ENCODE measurements at regions of chr6 and their contacts with region 1.

Region 1: GRCh38 chr6:80605165-80605989 is 498.9 kb downstream of the BCKDHB start:
- DNase-seq: peak; percentile 60
- H3K4me3 ChIP-seq: no peak overlapping the region
- H3K27ac ChIP-seq: no peak overlapping the region
- H3K4me1 ChIP-seq: no peaks in the 10 kb centered on the region
- H3K27me3 ChIP-seq: no peaks in the 10 kb centered on the region
- CTCF ChIP-seq: peak; percentile 25 to 46
- POLR2A ChIP-seq: no peak

Region 2: DNA sequence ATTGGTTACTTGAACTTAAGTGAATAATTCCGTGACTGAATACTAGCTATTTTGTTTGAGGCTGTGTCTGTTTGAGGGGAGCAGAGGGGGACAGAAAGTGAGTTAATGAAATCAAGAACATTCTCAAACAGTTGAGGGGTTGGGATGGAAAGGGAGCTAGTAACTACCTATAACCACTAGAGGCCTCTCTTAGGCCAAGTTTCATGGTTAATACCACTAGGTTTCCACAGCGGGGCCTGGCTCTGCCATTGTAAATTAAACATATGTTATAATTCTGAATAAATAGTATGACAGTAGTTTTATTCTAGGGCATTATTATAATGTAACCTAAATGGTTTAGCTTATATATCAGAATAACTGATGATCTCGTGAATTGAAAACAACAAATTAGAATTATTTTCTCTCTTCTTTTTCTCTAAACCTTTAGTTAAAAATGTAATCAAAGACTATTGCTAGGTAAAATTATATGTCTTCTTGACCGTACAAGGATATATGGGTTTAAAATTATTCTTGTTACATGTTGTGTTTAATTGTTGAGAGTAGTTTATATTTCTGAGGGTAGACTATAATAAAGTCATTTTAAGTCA is 390.8 kb before region 1 on chr6:
- CTCF ChIA-PET with region 1: interaction called, 23 read pairs
- POLR2A ChIA-PET with region 1: no interaction called
- dilution Hi-C with region 1: no loop called
- intact Hi-C with region 1: loop called (anchors 1 kb)
- DNase-seq: peak; percentile 62
- H3K4me3 ChIP-seq: no peak overlapping the region
- H3K27ac ChIP-seq: no peak overlapping the region
- H3K4me1 ChIP-seq: no peaks in the 10 kb centered on the region
- H3K27me3 ChIP-seq: no peaks in the 10 kb centered on the region
- CTCF ChIP-seq: peak; percentile 55 to 74
- POLR2A ChIP-seq: no peak

Region 3: DNA sequence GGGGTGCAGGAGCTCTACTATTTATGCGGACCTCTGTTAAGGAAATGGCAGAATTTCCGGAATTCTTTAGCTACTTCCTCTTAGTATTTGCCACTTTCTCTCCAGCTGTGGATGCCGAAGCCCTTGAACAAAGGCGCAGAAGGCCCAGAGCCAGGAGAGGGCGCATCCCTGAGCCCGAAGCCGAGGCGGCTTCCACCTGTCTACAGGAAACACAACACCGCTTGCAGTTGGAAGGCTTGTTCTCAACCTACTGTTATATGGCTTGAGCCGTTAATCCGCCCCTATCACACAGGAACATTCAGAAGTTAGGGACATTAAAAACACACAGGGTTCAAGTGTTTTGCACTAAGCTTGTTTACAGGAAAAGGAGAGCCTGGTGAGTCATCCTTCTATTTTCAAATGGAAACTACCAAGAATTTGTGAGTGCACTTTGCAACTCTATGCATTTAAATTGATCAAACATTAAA is 81.8 kb before region 1 on chr6:
- CTCF ChIA-PET with region 1: interaction called, 9 read pairs
- POLR2A ChIA-PET with region 1: no interaction called
- dilution Hi-C with region 1: no loop called
- intact Hi-C with region 1: loop called (anchors 5 kb)
- DNase-seq: peak; percentile 93
- H3K4me3 ChIP-seq: peak overlapping the region in 1 of 3 experiments; percentile 21
- H3K27ac ChIP-seq: peak overlapping the region; percentile 79
- H3K4me1 ChIP-seq: peaks cover 23% of the 10 kb centered on the region
- H3K27me3 ChIP-seq: no peaks in the 10 kb centered on the region
- CTCF ChIP-seq: peak; percentile 61 to 67
- POLR2A ChIP-seq: no peak

Region 4: GRCh38 chr6:81075974-81076373 is 470.6 kb after region 1 on chr6:
- CTCF ChIA-PET with region 1: interaction called, 10 read pairs
- POLR2A ChIA-PET with region 1: no interaction called
- dilution Hi-C with region 1: no loop called
- intact Hi-C with region 1: loop called (anchors 10 kb)
- DNase-seq: peak; percentile 32
- H3K4me3 ChIP-seq: no peak overlapping the region
- H3K27ac ChIP-seq: no peak overlapping the region
- H3K4me1 ChIP-seq: no peaks in the 10 kb centered on the region
- H3K27me3 ChIP-seq: no peaks in the 10 kb centered on the region
- CTCF ChIP-seq: peak; percentile 27 to 56
- POLR2A ChIP-seq: no peak

Region 5: GRCh38 chr6:81981812-81982211 is 1376.4 kb after region 1 on chr6:
- CTCF ChIA-PET with region 1: interaction called, 3 read pairs
- POLR2A ChIA-PET with region 1: no interaction called
- dilution Hi-C with region 1: no loop called
- intact Hi-C with region 1: loop called (anchors 2 kb)
- DNase-seq: peak; percentile 68
- H3K4me3 ChIP-seq: no peak overlapping the region
- H3K27ac ChIP-seq: peak overlapping the region; percentile 66
- H3K4me1 ChIP-seq: peaks cover 15% of the 10 kb centered on the region
- H3K27me3 ChIP-seq: no peaks in the 10 kb centered on the region
- CTCF ChIP-seq: no peak
- POLR2A ChIP-seq: no peak

Region 6: DNA sequence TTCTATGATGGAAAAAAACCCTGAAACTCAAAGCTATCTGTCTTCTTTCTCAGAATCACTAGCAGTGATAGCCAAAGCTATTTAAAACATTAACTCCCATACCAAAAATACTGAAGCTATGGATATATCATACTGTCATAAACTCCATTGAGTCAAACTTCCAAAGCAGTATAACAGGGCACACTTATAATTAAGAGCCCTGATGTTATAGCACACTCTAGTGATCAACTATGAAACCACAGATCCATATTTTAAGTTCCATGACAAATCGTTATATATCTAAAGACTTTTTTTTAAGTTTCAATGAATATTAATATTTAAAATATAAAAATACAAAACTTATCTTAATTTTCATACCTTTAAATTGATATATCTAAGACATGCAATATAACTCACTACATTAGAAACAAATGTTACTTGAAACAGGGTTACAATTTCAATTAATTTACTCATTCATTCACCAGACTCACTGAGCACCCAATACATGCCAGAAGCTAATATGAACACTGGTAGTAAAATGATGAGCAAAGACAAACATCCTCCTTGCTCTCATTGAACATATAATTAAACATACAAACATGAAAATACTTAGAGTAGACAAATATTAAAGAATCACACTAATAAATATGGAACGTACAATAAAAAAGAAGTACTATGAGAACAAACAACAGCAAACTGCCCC is 1572.8 kb after region 1 on chr6:
- CTCF ChIA-PET with region 1: interaction called, 3 read pairs
- POLR2A ChIA-PET with region 1: no interaction called
- dilution Hi-C with region 1: no loop called
- intact Hi-C with region 1: loop called (anchors 2 kb)
- DNase-seq: peak; percentile 56
- H3K4me3 ChIP-seq: no peak overlapping the region
- H3K27ac ChIP-seq: no peak overlapping the region
- H3K4me1 ChIP-seq: no peaks in the 10 kb centered on the region
- H3K27me3 ChIP-seq: no peaks in the 10 kb centered on the region
- CTCF ChIP-seq: peak; percentile 19 to 26
- POLR2A ChIP-seq: no peak

Measured in endothelial cell of umbilical vein (primary cell).